ENCODE measurements at regions of chr7 and their contacts with region 1.

Region 1: DNA sequence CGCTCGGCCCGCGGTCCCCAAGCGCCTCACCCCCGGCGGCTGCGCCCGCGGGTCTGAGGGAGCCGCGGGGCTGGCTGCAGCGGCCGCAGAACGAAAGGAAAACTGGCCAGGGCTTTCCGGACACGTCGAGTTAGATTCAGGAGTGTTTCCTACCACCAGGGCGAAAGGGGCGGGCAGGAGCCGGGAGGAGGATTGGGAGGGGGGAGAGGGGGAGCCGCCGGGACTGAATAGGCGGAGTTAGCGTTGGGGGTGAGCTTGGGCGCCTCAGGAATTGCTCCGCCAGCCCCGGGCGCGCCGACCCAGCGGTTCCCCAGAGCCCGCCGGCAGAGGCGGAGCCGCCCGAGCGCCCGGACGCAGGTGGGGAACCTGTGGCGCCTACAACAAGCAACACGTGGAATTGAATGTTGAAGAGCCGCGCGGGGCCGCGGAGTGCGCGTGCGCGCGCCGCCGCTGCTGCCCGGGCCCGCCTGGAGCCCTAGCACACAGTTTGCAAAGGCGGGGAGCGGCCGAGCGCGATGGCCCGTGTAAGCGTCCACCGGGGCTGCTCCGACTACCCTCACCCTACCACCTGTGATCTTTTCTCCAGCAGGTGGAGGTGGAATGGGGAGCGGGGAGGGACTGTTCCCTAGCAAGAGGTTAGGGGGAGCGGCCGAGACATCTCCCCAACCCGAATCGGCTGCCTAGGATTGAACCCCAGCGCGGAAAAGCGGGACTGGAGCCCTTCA is at the start of gene CADPS2:
- DNase-seq: peak; percentile 91
- H3K4me3 Mint-ChIP-seq: peak within 1 kb of the TSS; percentile 95
- H3K27ac Mint-ChIP-seq: peak within 1 kb of the TSS; percentile 81
- H3K4me1 Mint-ChIP-seq: peaks cover 18% of the 10 kb centered on the region
- H3K27me3 Mint-ChIP-seq: no peaks in the 10 kb centered on the region
- CTCF ChIP-seq: no peak
- total RNA-seq, gene CADPS2: 14.1 and 16.4 TPM in 2 replicates

Region 2: GRCh38 chr7:122550545-122550944 is 336.0 kb before region 1 on chr7:
- CTCF ChIA-PET with region 1: interaction called, 3 read pairs
- intact Hi-C with region 1: loop called (anchors 5 kb)
- DNase-seq: no peak
- H3K4me3 Mint-ChIP-seq: no peak overlapping the region
- H3K27ac Mint-ChIP-seq: no peak overlapping the region
- H3K4me1 Mint-ChIP-seq: no peaks in the 10 kb centered on the region
- H3K27me3 Mint-ChIP-seq: no peaks in the 10 kb centered on the region
- CTCF ChIP-seq: no peak

Region 3: DNA sequence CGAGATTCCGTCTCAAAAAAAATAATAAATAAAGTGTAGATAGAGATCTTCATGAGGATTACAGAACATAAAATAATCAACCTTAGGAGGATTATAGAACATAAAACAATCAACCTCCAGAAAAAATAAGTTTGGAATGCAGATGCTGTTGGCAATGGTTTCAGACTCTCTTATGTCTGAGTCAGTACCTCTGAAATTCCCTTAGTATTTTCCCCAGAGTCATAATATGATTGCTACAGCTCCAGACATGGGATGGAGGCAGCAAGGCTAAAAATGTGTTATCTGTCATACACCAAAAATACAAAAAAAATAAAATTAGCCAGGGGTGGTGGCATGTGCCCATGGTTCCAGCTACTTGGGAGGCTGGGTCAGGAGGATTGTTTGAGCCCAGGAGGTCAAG is 22.5 kb before region 1 on chr7:
- CTCF ChIA-PET with region 1: no interaction called
- intact Hi-C with region 1: no loop called
- DNase-seq: no peak
- H3K4me3 Mint-ChIP-seq: no peak overlapping the region
- H3K27ac Mint-ChIP-seq: no peak overlapping the region
- H3K4me1 Mint-ChIP-seq: peaks cover 10% of the 10 kb centered on the region
- H3K27me3 Mint-ChIP-seq: no peaks in the 10 kb centered on the region
- CTCF ChIP-seq: no peak

Measured in Calu3 (cell line).